IMR-90 (cell line): ENCODE measurements at regions of chr4 and their contacts with region 1.

Region 1: GRCh38 chr4:2220016-2220630 is 21.8 kb downstream of the HAUS3 start:
- DNase-seq: peak; percentile 68
- ATAC-seq: peak; percentile 97
- H3K4me3 ChIP-seq: no peak overlapping the region
- H3K27ac ChIP-seq: no peak overlapping the region
- H3K4me1 ChIP-seq: peaks cover 3% of the 10 kb centered on the region; the same call in 1 of the 2 replicates
- H3K27me3 ChIP-seq: peaks cover 2% of the 10 kb centered on the region; the same call in 1 of the 2 replicates
- CTCF ChIP-seq: peak; percentile 88
- POLR2A ChIP-seq: no peak
- RAD21 ChIP-seq: peak; percentile 95

Region 2: GRCh38 chr4:1777822-1778641 is 442.1 kb before region 1 on chr4:
- CTCF ChIA-PET with region 1: no interaction called
- POLR2A ChIA-PET with region 1: no interaction called
- dilution Hi-C with region 1: no loop called
- in situ Hi-C with region 1: no loop called
- intact Hi-C with region 1: no loop called
- DNase-seq: no peak
- ATAC-seq: peak; percentile 68
- H3K4me3 ChIP-seq: no peak overlapping the region
- H3K27ac ChIP-seq: no peak overlapping the region
- H3K4me1 ChIP-seq: peaks cover 6% of the 10 kb centered on the region; the same call in 1 of the 2 replicates
- H3K27me3 ChIP-seq: peaks cover 2% of the 10 kb centered on the region; the same call in 1 of the 2 replicates
- CTCF ChIP-seq: no peak; the same call in 1 of the 2 replicates
- POLR2A ChIP-seq: no peak
- RAD21 ChIP-seq: no peak

Region 3: GRCh38 chr4:2354118-2354517 is 134.0 kb after region 1 on chr4:
- CTCF ChIA-PET with region 1: no interaction called
- POLR2A ChIA-PET with region 1: no interaction called
- dilution Hi-C with region 1: no loop called
- in situ Hi-C with region 1: no loop called
- intact Hi-C with region 1: loop called (anchors 1 kb)
- DNase-seq: no peak
- ATAC-seq: peak; percentile 57; the same call in 1 of the 2 replicates
- H3K4me3 ChIP-seq: no peak overlapping the region
- H3K27ac ChIP-seq: no peak overlapping the region
- H3K4me1 ChIP-seq: no peaks in the 10 kb centered on the region
- H3K27me3 ChIP-seq: peaks cover 3% of the 10 kb centered on the region
- CTCF ChIP-seq: peak; percentile 44
- POLR2A ChIP-seq: no peak
- RAD21 ChIP-seq: peak; percentile 46

Region 4: DNA sequence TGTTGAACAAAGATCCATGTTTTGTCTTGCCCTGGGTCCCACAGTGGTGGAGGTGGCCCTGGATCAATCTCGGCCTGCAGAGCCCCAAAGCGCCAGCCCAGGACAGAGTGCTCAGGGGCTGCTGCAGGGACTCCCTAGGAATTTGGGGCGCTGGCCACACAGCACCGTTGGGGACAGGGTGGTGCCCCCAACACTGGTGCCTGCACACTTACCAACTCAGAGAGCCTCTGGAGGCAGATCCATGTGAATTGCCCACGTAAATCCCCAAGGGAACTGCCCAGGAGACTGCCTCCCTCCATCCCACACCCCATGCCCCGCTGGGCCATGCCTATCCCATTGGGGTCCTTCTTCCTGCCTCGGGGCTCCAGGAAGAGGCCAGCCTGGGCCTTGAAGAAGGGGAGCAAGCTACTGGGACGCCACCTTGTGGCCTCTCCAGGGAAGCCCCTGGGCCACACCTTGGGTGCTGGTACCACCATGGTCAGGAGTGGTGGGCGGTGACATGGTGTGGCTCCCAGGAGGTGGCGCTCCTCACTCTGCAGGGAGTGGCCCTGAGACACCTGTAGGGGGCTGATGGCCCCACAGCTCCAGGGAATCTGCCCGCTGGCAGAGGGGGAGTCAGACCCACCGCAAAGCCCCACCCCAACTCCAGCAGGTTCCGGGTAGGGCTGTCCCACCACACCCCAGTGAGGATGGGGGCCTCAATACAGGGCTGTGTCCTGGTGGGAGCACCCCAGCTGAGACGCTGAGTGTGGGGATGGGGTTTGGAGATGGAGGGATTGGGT is 221.5 kb after region 1 on chr4:
- CTCF ChIA-PET with region 1: interaction called, 5 read pairs
- POLR2A ChIA-PET with region 1: no interaction called
- dilution Hi-C with region 1: no loop called
- in situ Hi-C with region 1: no loop called
- intact Hi-C with region 1: loop called (anchors 5 kb)
- DNase-seq: peak; percentile 41
- ATAC-seq: peak; percentile 91
- H3K4me3 ChIP-seq: no peak overlapping the region
- H3K27ac ChIP-seq: no peak overlapping the region
- H3K4me1 ChIP-seq: no peaks in the 10 kb centered on the region; the same call in 1 of the 2 replicates
- H3K27me3 ChIP-seq: peaks cover 5% of the 10 kb centered on the region
- CTCF ChIP-seq: peak; percentile 66
- POLR2A ChIP-seq: no peak
- RAD21 ChIP-seq: peak; percentile 69

Region 5: GRCh38 chr4:2462218-2462991 is 242.3 kb after region 1 on chr4:
- CTCF ChIA-PET with region 1: interaction called, 3 read pairs
- POLR2A ChIA-PET with region 1: no interaction called
- dilution Hi-C with region 1: no loop called
- in situ Hi-C with region 1: no loop called
- intact Hi-C with region 1: loop called (anchors 1 kb)
- DNase-seq: peak; percentile 76
- ATAC-seq: peak; percentile 97
- H3K4me3 ChIP-seq: peak overlapping the region; percentile 37
- H3K27ac ChIP-seq: peak overlapping the region; percentile 6; the same call in 1 of the 2 replicates
- H3K4me1 ChIP-seq: peaks cover 2% of the 10 kb centered on the region; the same call in 1 of the 2 replicates
- H3K27me3 ChIP-seq: peaks cover 8% of the 10 kb centered on the region
- CTCF ChIP-seq: peak; percentile 62
- POLR2A ChIP-seq: no peak
- RAD21 ChIP-seq: peak; percentile 62